ENCODE measurements at regions of chr4 and their contacts with region 1.

Region 1: GRCh38 chr4:144174401-144175067 is 34.0 kb upstream of the GYPA start:
- DNase-seq: no peak
- ATAC-seq: peak; percentile 37

Region 2: GRCh38 chr4:144223661-144224060 is 49.1 kb after region 1 on chr4:
- intact Hi-C with region 1: no loop called
- DNase-seq: no peak
- ATAC-seq: peak; percentile 19

Region 3: DNA sequence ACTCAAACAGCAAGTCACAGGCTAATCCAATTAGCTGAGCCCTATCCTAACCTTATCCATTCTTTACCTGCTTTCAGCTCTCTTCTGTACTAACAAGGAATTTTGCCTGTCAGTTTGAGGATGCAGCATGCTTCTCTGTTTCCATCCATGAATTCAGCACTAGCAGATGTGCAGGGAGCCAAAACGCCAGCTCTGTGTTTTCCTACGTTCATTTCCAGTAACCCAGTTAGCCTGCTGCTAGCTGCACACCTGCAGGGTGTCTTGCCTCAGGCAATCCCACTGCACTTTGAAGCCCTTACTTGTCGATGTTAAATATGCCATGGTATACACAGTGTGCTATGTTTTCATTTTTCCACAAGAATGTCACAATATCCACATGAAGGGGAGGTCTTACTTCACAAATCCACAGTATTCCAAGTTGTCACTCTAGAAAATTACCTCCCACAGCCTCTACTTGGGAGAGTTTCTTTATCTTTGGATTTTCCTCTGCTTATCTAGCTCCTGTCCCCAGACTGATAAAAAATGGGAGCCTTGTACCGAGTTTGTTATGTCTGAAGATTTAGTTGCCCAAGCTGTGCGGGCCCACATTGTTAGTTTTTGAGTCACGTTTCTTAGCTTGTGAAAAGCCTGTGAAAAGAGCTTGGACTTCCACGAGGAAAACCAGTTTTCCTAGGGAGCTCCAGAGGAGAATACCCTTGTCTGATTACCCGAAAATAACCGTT is 343.8 kb after region 1 on chr4:
- intact Hi-C with region 1: no loop called
- DNase-seq: no peak
- ATAC-seq: no peak

Region 4: DNA sequence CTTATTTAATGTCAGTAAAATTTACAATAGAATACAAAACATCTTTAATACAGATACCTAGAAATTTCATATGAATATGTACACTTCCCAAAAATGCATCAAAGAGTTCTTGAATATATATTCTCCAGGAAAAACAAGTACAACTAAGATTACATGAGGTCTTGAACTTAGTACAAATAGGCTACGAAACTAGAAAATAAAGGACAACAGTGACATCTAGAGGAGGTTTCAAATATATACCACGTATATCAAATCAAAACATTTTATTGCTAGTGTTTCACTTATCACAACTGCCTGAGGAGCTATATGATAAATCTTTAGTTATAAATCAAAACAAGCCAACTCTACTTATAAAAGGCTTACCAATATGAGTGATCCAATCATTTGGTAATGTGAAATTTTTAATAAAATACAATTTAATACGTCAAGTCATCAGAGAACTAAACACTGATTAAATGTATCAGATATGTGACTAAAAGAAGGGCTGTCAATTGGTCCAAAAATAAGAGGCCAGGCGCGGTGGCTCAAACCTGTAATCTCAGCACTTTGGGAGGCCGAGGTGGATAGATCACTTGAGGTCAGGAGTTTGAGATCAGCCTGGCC is 886.9 kb after region 1 on chr4:
- intact Hi-C with region 1: loop called (anchors 5 kb)
- DNase-seq: no peak
- ATAC-seq: peak; percentile 44